PC-9 (cell line): ENCODE measurements at regions of chr1 and their contacts with region 1.

Region 1: DNA sequence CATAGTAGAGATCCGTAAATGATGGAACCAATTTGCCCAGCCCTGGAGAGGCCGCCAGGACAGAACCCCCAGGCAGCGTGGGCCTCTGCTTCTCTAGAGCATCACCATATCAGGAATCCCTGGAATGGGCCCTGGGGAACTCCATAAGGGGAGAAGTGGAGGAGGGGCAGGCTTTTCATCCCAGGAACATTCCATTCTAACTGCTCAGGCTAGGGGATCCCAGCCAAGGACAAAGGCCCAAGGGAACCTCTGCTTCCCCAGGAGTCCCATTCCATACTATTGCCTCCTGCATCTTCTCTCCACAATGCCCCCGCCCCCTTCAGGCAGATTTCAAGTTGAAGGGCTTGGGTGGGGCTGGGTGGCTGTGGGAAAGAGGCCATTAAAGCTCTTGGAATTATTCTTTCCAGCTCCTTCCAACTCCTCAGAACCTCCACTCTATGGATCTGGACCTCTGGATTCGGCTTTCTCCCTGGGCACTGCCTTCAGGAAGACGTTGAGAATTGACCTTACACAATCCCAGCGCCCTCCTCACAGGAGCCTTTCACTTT is 6.0 kb downstream of the TRNP1 start:
- DNase-seq: peak; percentile 70 to 81
- H3K4me3 ChIP-seq: no peak overlapping the region
- H3K27ac ChIP-seq: peak overlapping the region; percentile 62
- H3K4me1 ChIP-seq: peaks cover 40% of the 10 kb centered on the region
- H3K27me3 ChIP-seq: no peaks in the 10 kb centered on the region
- CTCF ChIP-seq: no peak

Region 2: DNA sequence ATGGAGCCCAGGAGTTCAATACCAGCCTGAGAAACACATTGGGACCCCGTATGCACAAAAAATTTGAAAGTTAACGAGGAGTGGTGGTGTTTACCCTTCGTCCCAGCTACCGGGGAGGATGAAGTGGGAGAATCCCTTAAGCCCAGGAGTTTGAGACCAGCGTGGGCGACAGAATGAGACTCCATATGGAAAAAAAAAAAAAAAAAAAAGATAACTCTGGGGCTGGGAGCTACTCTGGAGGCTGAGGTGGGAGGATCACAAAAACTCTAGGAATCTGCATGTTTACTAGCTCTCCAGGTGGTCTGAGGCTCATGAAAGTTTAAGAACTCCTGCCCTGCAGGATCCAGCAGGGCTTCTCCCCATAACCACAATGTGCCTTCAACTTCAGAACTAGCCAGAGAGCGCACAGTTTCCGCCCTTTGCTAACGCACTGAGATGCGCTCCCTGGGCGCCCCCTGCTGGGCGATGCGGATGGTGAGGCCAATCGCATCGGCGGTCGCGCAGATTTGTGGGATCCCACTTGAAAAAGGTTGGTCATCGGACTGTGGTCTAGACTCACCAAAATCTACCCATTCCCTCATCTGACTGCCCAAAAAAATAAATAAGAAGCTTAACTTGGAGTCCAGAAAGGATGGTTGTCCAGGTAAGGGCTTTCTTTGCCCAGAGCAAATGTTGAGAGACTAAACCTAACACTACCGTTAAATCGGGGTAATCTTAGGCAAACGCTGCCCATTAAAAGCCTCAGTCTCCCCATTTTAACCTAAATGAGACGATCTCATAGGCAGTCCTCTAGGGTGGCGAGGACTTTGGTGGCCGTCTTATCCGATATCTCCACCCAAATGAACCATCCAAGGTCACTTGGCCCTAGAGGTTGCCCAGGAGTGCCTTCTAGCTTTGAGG is 635.7 kb before region 1 on chr1:
- CTCF ChIA-PET with region 1: no interaction called
- POLR2A ChIA-PET with region 1: no interaction called
- intact Hi-C with region 1: no loop called
- DNase-seq: peak in 1 of 2 experiments; percentile 76
- H3K4me3 ChIP-seq: no peak overlapping the region
- H3K27ac ChIP-seq: no peak overlapping the region
- H3K4me1 ChIP-seq: peaks cover 7% of the 10 kb centered on the region
- H3K27me3 ChIP-seq: no peaks in the 10 kb centered on the region
- CTCF ChIP-seq: peak; percentile 80

Region 3: DNA sequence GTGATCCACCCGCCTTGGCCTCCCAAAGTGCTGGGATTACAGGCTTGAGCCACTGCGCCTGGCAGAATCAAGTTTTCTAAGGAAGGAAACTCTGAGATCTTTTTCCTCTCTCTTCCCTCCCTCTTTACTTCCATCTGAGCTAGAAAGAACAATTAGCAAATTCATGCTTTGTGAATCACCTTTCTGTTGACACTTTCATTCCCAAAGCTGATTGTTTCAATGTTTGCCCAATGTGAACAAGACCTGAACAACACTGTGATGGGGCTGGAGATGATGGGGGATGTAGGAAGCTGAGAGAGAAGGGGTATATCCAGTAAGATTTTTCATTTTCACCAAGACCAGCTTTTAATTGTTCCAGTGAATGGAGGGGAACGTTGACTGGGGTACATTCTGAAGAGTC is 18.8 kb after region 1 on chr1:
- CTCF ChIA-PET with region 1: interaction called, 10 read pairs
- POLR2A ChIA-PET with region 1: no interaction called
- intact Hi-C with region 1: loop called (anchors 2 kb)
- DNase-seq: peak in 1 of 2 experiments; percentile 80
- H3K4me3 ChIP-seq: no peak overlapping the region
- H3K27ac ChIP-seq: peak overlapping the region; percentile 79
- H3K4me1 ChIP-seq: peaks cover 12% of the 10 kb centered on the region; the same call in 1 of the 2 replicates
- H3K27me3 ChIP-seq: no peaks in the 10 kb centered on the region
- CTCF ChIP-seq: no peak

Region 4: DNA sequence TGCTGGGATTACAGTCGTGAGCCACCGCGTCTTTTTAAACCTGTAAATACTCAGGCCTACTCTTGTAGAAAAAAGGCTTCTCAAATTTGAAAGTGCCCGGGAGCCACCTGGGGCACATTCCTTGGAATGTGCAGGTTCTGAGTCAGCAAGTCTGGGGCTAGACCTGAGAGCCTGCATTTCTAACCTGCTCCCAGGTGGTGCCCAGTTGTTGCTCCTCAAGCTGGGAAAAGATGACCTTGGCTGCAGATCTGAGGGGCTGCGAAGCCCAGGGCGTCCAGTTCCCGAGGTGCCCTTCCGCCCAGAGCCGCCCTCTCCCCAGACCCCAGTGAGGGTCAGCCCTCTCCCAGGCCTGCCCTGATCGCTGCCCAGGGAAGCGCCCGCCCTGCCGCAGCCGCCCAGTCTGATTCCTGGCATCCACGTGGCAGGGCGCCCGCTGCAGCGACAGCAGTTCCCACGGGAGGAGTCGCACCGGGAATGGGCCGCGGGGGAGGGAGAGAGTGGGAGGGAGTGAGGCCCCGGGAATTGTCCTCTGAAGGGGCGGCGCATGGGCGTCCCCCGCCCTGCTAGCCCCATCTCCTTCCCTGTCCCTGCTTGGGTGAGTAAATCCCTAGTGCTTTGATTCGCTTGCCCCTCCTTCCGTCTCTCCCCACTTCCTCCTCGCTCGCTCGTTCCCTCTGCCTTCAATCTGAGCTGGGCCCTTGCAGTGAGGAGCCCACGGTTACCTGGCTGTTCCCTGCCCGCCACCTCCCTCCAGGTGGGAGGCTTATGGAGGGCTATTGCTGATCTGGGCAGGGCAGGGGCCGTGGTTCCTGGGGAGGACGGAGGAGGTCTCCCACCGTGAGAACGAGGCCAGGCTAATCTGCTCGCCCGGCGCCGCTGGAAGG is 32.0 kb after region 1 on chr1:
- CTCF ChIA-PET with region 1: interaction called, 8 read pairs
- POLR2A ChIA-PET with region 1: no interaction called
- intact Hi-C with region 1: loop called (anchors 2 kb)
- DNase-seq: peak; percentile 76 to 93
- H3K4me3 ChIP-seq: peak overlapping the region; percentile 59; the same call in 1 of the 2 replicates
- H3K27ac ChIP-seq: peak overlapping the region; percentile 81
- H3K4me1 ChIP-seq: peaks cover 5% of the 10 kb centered on the region; the same call in 1 of the 2 replicates
- H3K27me3 ChIP-seq: no peaks in the 10 kb centered on the region
- CTCF ChIP-seq: no peak

Region 5: DNA sequence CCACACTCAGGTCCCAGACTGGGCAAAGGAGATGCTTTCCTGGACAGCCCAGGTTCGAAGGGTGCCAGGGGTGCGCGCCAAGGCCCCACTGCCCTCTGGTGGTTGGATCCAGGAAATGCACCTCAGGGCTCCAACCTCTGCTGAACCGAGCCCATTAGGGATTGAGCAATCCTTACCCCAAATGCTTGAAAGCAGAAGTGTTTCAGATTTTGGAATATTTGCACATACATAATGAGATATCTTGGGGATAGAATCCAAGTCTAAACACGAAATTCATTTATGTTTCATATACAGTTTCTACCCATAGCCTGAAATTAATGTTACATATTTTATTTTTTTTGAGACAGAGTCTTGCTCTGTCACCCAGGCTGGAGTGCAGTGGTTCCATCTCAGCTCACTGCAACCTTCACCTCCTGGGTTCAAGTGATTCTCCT is 98.0 kb after region 1 on chr1:
- CTCF ChIA-PET with region 1: interaction called, 13 read pairs
- POLR2A ChIA-PET with region 1: interaction called, 9 read pairs
- intact Hi-C with region 1: loop called (anchors 1 kb)
- DNase-seq: peak; percentile 49 to 77
- H3K4me3 ChIP-seq: no peak overlapping the region
- H3K27ac ChIP-seq: no peak overlapping the region
- H3K4me1 ChIP-seq: 0 out of 2 replicates have a peak, but pooled peaks cover 12% of the 10 kb centered on the region
- H3K27me3 ChIP-seq: no peaks in the 10 kb centered on the region
- CTCF ChIP-seq: peak; percentile 90